Endothelial cell of umbilical vein (primary cell): ENCODE measurements at regions of chr6 and their contacts with region 1.

Region 1: GRCh38 chr6:22880686-22881433 is 311.5 kb downstream of the HDGFL1 start:
- DNase-seq: peak; percentile 92
- H3K4me3 ChIP-seq: no peak overlapping the region
- H3K27ac ChIP-seq: peak overlapping the region; percentile 80
- H3K4me1 ChIP-seq: peaks cover 53% of the 10 kb centered on the region
- H3K27me3 ChIP-seq: no peaks in the 10 kb centered on the region
- CTCF ChIP-seq: no peak
- POLR2A ChIP-seq: no peak

Region 2: DNA sequence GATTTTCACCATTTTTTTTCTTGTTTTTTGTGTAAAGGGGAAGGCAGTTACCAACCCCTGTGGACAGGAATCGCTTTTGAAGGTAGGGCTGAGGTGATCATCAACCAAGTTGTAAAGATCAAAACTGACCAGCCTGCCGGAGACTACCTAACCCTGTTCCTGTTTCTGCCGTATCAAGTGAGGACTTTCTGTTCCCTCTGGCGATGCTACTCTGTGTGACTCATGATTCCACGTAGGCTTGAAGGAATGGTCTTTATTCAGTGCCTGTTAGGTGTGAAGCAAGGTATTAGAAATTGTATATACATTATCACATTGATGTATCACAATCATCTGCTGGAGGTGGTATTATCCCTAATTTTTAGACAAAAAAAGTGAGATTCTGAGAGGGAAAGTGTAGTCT is 1126.0 kb before region 1 on chr6:
- CTCF ChIA-PET with region 1: no interaction called
- POLR2A ChIA-PET with region 1: no interaction called
- dilution Hi-C with region 1: no loop called
- intact Hi-C with region 1: loop called (anchors 5 kb)
- DNase-seq: peak; percentile 31
- H3K4me3 ChIP-seq: no peak overlapping the region
- H3K27ac ChIP-seq: peak overlapping the region; percentile 64
- H3K4me1 ChIP-seq: peaks cover 48% of the 10 kb centered on the region
- H3K27me3 ChIP-seq: no peaks in the 10 kb centered on the region
- CTCF ChIP-seq: no peak
- POLR2A ChIP-seq: no peak

Region 3: DNA sequence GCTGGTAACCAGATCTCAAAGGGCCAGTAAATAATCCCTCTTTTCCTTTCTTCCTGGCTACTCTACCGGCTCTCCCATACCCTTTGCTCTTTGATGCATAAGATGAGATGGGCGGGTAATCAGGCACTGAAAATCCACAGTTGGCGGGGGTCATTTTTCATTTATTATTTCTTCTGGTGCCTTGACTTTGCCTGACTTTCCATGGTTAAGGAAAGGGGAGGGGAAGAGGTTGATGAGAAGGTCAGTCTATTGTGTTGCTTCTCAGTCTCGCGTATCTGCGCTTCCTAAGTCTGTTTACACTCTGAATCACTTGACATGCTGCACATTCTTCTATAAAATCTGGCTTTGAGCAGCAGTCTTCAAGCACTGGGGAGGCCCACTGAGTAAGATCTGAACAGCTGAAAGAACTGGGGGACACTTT is 432.6 kb before region 1 on chr6:
- CTCF ChIA-PET with region 1: no interaction called
- POLR2A ChIA-PET with region 1: no interaction called
- dilution Hi-C with region 1: no loop called
- intact Hi-C with region 1: loop called (anchors 5 kb)
- DNase-seq: peak; percentile 98
- H3K4me3 ChIP-seq: no peak overlapping the region
- H3K27ac ChIP-seq: peak overlapping the region; percentile 85
- H3K4me1 ChIP-seq: peaks cover 49% of the 10 kb centered on the region
- H3K27me3 ChIP-seq: no peaks in the 10 kb centered on the region
- CTCF ChIP-seq: no peak
- POLR2A ChIP-seq: no peak

Region 4: GRCh38 chr6:22892452-22892851 is 11.6 kb after region 1 on chr6:
- CTCF ChIA-PET with region 1: interaction called, 8 read pairs
- POLR2A ChIA-PET with region 1: no interaction called
- dilution Hi-C with region 1: no loop called
- intact Hi-C with region 1: loop called (anchors 1 kb)
- DNase-seq: peak; percentile 96
- H3K4me3 ChIP-seq: no peak overlapping the region
- H3K27ac ChIP-seq: peak overlapping the region; percentile 95
- H3K4me1 ChIP-seq: peaks cover 28% of the 10 kb centered on the region
- H3K27me3 ChIP-seq: no peaks in the 10 kb centered on the region
- CTCF ChIP-seq: no peak
- POLR2A ChIP-seq: peak; percentile 19